IMR-90 (cell line): ENCODE measurements at regions of chr1 and their contacts with region 1.

Region 1: DNA sequence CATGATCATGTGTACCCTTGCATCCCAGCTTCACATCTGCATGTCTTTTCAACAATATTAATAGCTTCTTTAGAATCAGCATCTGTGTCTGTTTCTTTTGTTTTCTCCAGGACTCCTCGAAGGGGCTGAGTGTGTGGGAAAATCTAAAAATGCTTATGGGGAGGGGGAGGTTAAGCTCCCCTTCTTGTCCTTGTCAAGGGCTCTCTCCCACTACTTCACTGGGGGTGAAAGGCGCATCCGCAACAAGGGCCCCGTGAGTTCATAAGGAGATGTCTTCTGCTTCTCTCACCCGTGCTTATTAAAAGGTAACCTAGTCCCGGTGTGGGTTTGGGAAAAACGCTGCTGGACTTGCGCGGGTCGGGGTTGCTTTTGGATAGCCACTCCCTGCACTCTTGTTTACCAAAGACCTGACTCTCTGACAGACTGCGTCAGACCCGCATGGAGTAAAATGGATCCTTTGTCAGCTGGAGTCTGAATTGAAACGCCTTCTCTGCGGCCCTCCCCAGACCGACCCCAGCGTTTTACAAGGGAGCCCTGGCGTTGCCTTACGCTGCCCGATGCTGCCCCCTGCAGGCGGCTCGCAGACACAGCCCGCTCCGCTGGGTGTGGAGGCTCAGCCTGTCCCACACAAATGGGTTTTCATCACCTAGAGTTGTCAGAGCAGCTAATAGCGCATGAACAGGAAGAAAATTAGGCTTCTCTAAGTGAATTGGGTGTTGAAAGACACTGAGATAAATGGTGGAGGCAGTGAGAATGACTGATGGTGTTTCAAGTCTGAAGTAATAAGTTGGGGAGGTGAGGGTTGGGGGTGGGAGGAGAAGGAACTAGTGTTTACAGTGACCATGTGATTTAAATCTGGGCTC is 53.8 kb downstream of the IER5 start:
- DNase-seq: peak; percentile 89
- ATAC-seq: peak; percentile 93
- H3K4me3 ChIP-seq: peak overlapping the region; percentile 6; the same call in 1 of the 2 replicates
- H3K27ac ChIP-seq: peak overlapping the region; percentile 59
- H3K4me1 ChIP-seq: peaks cover 29% of the 10 kb centered on the region
- H3K27me3 ChIP-seq: no peaks in the 10 kb centered on the region
- CTCF ChIP-seq: peak; percentile 98
- POLR2A ChIP-seq: peak; percentile 45; the same call in 1 of the 2 replicates
- RAD21 ChIP-seq: peak; percentile 100

Region 2: DNA sequence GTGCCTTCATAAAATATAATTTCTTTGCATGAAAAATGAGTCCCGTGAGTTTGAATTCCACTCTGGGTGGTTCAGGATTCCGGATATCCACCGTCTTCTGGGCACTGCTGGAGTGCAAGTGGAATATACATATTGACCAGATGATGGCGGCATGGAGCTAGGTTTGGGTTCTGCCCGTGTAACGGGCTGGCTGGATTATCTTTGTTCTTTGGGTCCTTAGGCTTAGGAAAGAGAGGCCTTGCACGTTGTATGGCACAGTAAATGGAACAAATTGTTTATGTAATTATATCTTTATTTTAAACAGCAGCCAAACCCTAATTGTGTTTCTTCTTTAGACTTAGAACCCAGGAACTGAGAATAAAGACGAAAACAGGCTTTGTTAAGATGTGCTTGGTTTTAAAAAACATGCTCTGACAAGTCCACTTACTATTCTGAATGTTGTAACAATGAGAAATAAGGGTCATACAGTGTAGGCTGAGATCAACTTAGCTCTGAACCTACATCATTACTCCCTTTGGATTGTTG is 626.4 kb before region 1 on chr1:
- CTCF ChIA-PET with region 1: interaction called, 3 read pairs
- POLR2A ChIA-PET with region 1: no interaction called
- dilution Hi-C with region 1: no loop called
- in situ Hi-C with region 1: no loop called
- intact Hi-C with region 1: loop called (anchors 5 kb)
- DNase-seq: peak; percentile 84
- ATAC-seq: peak; percentile 98
- H3K4me3 ChIP-seq: no peak overlapping the region
- H3K27ac ChIP-seq: peak overlapping the region; percentile 98; the same call in 1 of the 2 replicates
- H3K4me1 ChIP-seq: peaks cover 8% of the 10 kb centered on the region
- H3K27me3 ChIP-seq: no peaks in the 10 kb centered on the region
- CTCF ChIP-seq: peak; percentile 94
- POLR2A ChIP-seq: peak; percentile 56
- RAD21 ChIP-seq: peak; percentile 98

Region 3: GRCh38 chr1:180881806-180882509 is 260.4 kb before region 1 on chr1:
- CTCF ChIA-PET with region 1: interaction called, 12 read pairs
- POLR2A ChIA-PET with region 1: no interaction called
- dilution Hi-C with region 1: no loop called
- in situ Hi-C with region 1: loop called (anchors 5 kb)
- intact Hi-C with region 1: loop called (anchors 1 kb)
- DNase-seq: peak; percentile 67
- ATAC-seq: peak; percentile 75
- H3K4me3 ChIP-seq: no peak overlapping the region
- H3K27ac ChIP-seq: no peak overlapping the region
- H3K4me1 ChIP-seq: peaks cover 4% of the 10 kb centered on the region
- H3K27me3 ChIP-seq: no peaks in the 10 kb centered on the region
- CTCF ChIP-seq: peak; percentile 70
- POLR2A ChIP-seq: no peak
- RAD21 ChIP-seq: peak; percentile 62

Region 4: GRCh38 chr1:180962178-180962577 is 180.1 kb before region 1 on chr1:
- CTCF ChIA-PET with region 1: no interaction called
- POLR2A ChIA-PET with region 1: no interaction called
- dilution Hi-C with region 1: no loop called
- in situ Hi-C with region 1: no loop called
- intact Hi-C with region 1: no loop called
- DNase-seq: no peak
- ATAC-seq: no peak
- H3K4me3 ChIP-seq: no peak overlapping the region
- H3K27ac ChIP-seq: no peak overlapping the region
- H3K4me1 ChIP-seq: peaks cover 2% of the 10 kb centered on the region; the same call in 1 of the 2 replicates
- H3K27me3 ChIP-seq: no peaks in the 10 kb centered on the region
- CTCF ChIP-seq: no peak
- POLR2A ChIP-seq: no peak
- RAD21 ChIP-seq: no peak

Region 5: DNA sequence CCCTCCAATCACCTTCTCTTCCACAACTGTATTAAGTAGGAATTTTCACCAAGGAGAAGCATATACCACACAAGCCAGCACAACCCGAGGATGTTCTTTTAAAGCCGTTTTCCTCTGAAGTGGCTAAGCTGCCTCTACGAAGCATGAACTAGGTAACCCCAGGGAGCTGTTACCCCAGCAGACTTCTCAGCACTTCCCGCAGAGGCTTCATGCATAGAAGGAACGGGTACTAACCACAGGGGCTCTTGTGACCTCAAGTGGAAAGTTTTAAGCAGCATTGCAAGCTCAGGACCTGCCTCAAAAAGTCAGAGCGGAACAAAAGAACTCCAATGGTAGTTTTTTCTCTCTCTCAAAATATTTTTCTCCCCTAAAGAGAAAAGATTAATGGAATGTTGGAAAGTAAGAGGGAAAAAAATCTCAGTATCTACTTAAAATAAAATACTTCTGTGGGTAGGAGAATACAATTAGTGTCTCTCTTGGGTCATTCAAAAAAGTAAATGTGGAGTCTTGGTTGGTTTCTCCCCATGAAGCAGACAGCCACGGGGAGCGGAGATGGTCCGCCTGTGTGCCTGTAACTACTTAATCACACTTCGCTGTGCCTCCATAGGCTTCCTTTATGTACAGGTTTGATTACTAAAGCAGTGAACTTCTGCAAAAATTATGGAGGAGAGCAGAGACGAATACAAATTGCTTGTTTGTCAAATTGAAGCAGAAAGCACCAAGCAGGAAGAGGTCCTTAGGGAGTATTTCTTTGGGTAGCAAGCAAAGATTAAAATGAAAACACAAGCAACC is 160.5 kb before region 1 on chr1:
- CTCF ChIA-PET with region 1: no interaction called
- POLR2A ChIA-PET with region 1: no interaction called
- dilution Hi-C with region 1: no loop called
- in situ Hi-C with region 1: no loop called
- intact Hi-C with region 1: loop called (anchors 1 kb)
- DNase-seq: no peak
- ATAC-seq: no peak
- H3K4me3 ChIP-seq: no peak overlapping the region
- H3K27ac ChIP-seq: no peak overlapping the region
- H3K4me1 ChIP-seq: peaks cover 8% of the 10 kb centered on the region
- H3K27me3 ChIP-seq: no peaks in the 10 kb centered on the region
- CTCF ChIP-seq: no peak
- POLR2A ChIP-seq: no peak
- RAD21 ChIP-seq: no peak

Region 6: GRCh38 chr1:181033799-181034451 is 108.4 kb before region 1 on chr1 and contains the start of gene MR1:
- CTCF ChIA-PET with region 1: interaction called, 24 read pairs
- POLR2A ChIA-PET with region 1: no interaction called
- dilution Hi-C with region 1: no loop called
- in situ Hi-C with region 1: loop called (anchors 5 kb)
- intact Hi-C with region 1: loop called (anchors 1 kb)
- DNase-seq: peak; percentile 83
- ATAC-seq: peak; percentile 94
- H3K4me3 ChIP-seq: peak within 1 kb of the TSS; percentile 47
- H3K27ac ChIP-seq: peak within 1 kb of the TSS; percentile 56
- H3K4me1 ChIP-seq: peaks cover 13% of the 10 kb centered on the region
- H3K27me3 ChIP-seq: no peaks in the 10 kb centered on the region
- CTCF ChIP-seq: no peak
- POLR2A ChIP-seq: no peak
- RAD21 ChIP-seq: no peak
- total RNA-seq, gene MR1: 5.0 and 6.1 TPM in 2 replicates

Region 7: DNA sequence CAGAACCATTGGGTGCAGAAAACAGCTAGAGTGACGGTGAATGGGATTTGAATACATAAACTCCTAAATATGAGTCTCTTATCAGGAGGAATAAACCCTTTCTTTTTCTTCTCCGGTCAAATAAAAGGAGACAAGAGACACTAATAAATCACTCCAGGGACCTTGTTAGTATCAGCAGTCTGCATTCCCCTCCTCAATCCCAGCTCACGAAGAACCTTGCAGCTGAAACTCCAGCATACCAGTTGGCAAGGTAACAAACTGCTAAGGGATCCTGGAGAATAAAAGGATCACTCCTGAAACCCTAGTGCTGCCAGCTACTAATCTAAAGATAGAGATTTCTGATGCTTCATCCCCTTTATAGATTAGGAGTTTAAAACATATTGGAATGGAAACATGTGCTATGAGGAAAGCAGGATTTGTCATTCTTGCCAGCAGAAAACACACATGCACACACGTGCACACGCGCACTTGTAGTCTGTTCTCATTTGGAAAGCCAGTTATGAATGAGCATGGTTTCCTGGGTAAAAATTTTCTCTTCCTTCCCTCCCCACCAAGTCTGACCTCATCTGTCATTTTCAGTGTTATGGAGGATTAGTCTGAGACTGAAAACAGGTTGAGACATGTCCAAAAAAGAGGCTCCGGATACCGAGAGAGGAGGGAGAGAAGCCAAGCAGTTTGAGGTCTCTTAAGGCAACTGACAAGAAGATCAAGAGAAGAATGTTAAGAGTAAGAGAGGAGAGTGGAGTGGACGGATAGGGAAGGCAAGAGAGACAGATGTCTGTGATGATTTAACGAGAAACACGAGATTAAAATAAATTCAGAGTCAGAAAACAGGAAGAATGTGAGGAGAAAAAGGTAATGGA is 42.9 kb before region 1 on chr1:
- CTCF ChIA-PET with region 1: interaction called, 11 read pairs
- POLR2A ChIA-PET with region 1: interaction called, 3 read pairs
- dilution Hi-C with region 1: no loop called
- in situ Hi-C with region 1: loop called (anchors 5 kb)
- intact Hi-C with region 1: no loop called
- DNase-seq: peak; percentile 47
- ATAC-seq: no peak
- H3K4me3 ChIP-seq: no peak overlapping the region
- H3K27ac ChIP-seq: peak overlapping the region; percentile 6; the same call in 1 of the 2 replicates
- H3K4me1 ChIP-seq: peaks cover 48% of the 10 kb centered on the region
- H3K27me3 ChIP-seq: no peaks in the 10 kb centered on the region
- CTCF ChIP-seq: no peak
- POLR2A ChIP-seq: no peak
- RAD21 ChIP-seq: no peak

Region 8: DNA sequence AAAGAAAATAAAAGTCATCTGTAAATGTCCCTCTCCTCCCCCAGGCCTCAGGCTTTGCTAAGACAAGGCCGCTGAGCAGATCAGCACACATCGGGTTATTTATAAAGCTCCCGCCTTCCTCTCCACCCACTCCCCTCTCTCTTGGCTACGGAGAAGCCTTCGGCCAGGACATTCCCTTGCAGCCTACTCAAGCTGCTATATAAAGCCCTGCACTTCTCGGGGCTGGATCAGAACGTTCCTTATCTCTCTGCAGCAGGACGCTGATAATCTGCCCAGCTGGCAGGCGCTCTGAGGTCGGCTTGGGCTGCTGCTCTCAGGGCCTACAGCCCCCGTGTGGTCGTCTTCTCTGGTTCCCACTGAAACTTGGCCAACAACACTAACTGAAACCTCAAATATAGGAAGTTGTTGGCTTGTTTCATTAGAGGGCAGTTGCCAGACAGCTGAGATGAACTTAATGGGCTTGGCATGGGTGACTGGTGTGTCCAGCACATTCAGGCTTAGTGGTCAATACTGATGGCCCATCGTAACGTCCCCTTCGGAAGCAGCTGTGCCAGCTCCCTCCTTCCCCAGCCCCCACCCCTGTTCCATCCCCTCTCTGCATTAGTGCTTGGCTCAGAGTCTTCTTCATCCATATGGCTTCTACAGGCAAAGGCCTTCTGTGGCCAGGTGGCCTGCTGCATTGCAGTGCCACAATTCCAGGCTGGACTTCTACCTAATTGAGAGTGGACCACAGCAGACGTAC is 10.7 kb after region 1 on chr1:
- CTCF ChIA-PET with region 1: interaction called, 24 read pairs
- POLR2A ChIA-PET with region 1: no interaction called
- dilution Hi-C with region 1: no loop called
- in situ Hi-C with region 1: no loop called
- intact Hi-C with region 1: no loop called
- DNase-seq: peak; percentile 94
- ATAC-seq: peak; percentile 95
- H3K4me3 ChIP-seq: no peak overlapping the region
- H3K27ac ChIP-seq: peak overlapping the region; percentile 32
- H3K4me1 ChIP-seq: peaks cover 6% of the 10 kb centered on the region
- H3K27me3 ChIP-seq: no peaks in the 10 kb centered on the region
- CTCF ChIP-seq: peak; percentile 45
- POLR2A ChIP-seq: peak; percentile 83
- RAD21 ChIP-seq: peak; percentile 47